HepG2 (cell line): ENCODE measurements at regions of chr11 and their contacts with region 1.

Region 1: GRCh38 chr11:108008656-108009496 is at the start of gene CUL5:
- DNase-seq: peak; percentile 85
- ATAC-seq: peak; percentile 96
- H3K4me3 ChIP-seq: peak within 1 kb of the TSS; percentile 87 to 99 (median 97)
- H3K27ac ChIP-seq: peak within 1 kb of the TSS; percentile 99
- H3K4me1 ChIP-seq: peaks cover 37% of the 10 kb centered on the region
- H3K27me3 ChIP-seq: no peaks in the 10 kb centered on the region
- CTCF ChIP-seq: peak; percentile 95
- EP300 ChIP-seq: peak in 1 of 2 experiments; percentile 75; a peak in 2 of 4 replicates
- POLR2A ChIP-seq: peak; percentile 85 to 98
- RAD21 ChIP-seq: peak; percentile 80
- total RNA-seq, gene CUL5: 24.7 and 35.5 TPM in 2 replicates

Region 2: DNA sequence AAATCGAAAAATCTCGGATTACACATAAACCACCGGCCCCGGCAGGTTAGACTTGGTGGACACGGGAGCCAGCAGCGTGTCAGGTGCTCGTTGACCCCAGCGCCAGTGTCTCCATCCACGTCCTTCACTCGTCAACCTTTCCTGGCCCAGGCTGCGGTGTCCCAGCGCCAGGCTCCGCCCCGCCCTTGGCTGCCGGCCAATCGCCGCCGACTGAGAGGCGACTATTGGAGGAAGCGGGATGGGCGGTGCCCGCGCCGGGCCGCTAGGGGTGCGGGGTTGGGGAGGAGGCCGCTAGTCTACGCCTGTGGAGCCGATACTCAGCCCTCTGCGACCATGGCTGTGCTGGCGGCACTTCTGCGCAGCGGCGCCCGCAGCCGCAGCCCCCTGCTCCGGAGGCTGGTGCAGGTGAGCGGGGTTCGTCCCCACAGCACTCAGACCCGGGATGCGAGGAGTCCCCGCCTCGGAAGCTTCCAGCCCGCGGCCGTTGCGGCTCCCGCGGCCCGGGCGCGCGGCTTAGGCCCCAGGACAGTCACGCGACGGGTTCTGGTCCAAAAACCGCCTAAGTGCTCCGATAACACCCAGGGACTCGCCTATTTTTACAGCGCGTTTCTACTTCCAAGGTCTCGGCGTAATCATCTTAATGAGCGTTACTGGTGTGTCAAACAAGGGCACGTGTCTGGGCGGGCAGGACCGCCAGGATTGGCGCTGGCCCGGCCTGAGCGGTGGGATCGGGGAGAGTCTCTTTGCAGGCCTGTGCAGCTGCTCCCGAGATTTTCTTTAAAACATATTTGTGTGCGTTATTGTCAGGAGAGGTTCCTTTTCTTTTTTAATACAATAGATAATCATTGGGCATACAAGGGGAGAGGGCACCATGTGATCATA is 112.6 kb after region 1 on chr11 and contains the start of gene ACAT1:
- CTCF ChIA-PET with region 1: no interaction called
- POLR2A ChIA-PET with region 1: no interaction called
- in situ Hi-C with region 1: no loop called
- intact Hi-C with region 1: loop called (anchors 10 kb)
- DNase-seq: peak; percentile 91
- ATAC-seq: peak; percentile 97
- H3K4me3 ChIP-seq: peak within 1 kb of the TSS; percentile 77 to 85 (median 82)
- H3K27ac ChIP-seq: peak within 1 kb of the TSS; percentile 82
- H3K4me1 ChIP-seq: peaks cover 37% of the 10 kb centered on the region
- H3K27me3 ChIP-seq: no peaks in the 10 kb centered on the region; a peak in 1 of 5 replicates
- CTCF ChIP-seq: peak; percentile 45; the same call in 1 of the 2 replicates
- EP300 ChIP-seq: no peak
- POLR2A ChIP-seq: peak; percentile 89 to 95
- RAD21 ChIP-seq: peak; percentile 45; the same call in 1 of the 2 replicates
- total RNA-seq, gene ACAT1: 165 and 181 TPM in 2 replicates

Region 3: DNA sequence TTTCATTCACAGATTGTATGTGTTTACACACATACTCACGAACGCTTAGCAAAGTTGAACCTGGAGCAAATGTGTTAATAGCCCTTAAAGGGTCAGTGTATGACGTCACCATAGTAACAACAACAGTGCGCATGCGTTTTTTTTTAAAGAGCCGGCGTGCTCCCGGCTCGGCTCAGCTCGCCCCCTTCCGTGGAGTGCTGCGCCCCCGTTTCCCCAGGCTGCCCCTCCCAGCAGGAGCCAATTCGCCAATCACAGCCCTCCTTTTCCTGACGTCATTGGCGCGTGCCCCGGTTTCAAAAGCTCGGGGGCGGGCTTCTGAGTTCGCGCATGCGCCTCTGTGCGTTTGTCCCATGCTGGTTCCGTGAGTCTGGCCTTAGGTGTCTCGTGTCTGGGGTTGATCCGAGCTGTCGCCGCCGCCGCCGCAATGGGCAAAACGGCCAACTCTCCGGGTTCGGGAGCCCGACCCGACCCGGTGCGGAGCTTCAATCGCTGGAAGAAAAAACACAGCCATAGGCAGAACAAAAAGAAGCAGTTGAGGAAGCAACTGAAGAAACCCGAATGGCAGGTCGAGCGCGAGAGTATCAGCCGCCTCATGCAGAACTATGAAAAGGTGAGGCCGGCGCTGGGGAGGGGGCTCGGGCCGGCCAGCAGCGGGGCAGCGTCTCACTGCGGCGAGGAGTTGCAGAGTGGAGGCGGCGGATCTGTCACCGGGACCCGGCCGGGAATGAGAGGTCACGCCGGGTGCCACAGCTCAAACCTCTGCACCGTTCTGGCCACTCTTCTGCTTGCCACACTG is 656.1 kb after region 1 on chr11 and contains the start of gene DDX10:
- CTCF ChIA-PET with region 1: no interaction called
- POLR2A ChIA-PET with region 1: interaction called, 10 read pairs
- in situ Hi-C with region 1: no loop called
- intact Hi-C with region 1: no loop called
- DNase-seq: peak; percentile 95
- ATAC-seq: peak; percentile 89
- H3K4me3 ChIP-seq: peak within 1 kb of the TSS; percentile 77 to 90 (median 81)
- H3K27ac ChIP-seq: peak within 1 kb of the TSS; percentile 59
- H3K4me1 ChIP-seq: peaks cover 65% of the 10 kb centered on the region
- H3K27me3 ChIP-seq: no peaks in the 10 kb centered on the region
- CTCF ChIP-seq: peak; percentile 50
- EP300 ChIP-seq: no peak
- POLR2A ChIP-seq: peak; percentile 60 to 71
- RAD21 ChIP-seq: no peak
- total RNA-seq, gene DDX10: 32.0 and 39.5 TPM in 2 replicates